ENCODE measurements at regions of chr20 and their contacts with region 1.

Region 1: DNA sequence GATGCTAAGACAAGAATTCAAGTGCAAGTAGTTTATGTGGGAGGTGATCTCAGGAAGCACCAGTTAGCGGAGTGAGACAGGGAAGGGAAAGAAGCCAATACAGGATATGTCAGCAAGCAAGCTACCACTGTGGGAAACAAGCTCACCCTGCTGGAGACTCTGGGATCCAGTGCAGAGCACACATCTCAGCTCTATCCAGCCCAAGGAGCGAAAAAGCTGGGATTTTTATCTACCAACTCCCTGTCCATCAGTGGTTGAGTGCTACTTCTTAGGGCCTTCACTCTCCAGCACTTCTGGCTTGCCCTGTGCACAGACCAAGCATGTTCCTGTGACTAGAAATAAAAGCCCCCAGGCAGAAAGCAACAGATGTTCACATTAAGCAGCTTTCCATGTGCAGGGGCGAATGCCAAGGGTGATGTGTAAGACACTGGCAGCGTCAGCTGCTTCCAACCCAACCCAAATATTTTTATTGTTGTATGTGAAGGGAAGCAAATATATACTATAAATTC is 10.8 kb upstream of the RNF24 start:
- DNase-seq: peak; percentile 73
- H3K27ac ChIP-seq: peak overlapping the region; percentile 76
- CTCF ChIP-seq: no peak

Region 2: DNA sequence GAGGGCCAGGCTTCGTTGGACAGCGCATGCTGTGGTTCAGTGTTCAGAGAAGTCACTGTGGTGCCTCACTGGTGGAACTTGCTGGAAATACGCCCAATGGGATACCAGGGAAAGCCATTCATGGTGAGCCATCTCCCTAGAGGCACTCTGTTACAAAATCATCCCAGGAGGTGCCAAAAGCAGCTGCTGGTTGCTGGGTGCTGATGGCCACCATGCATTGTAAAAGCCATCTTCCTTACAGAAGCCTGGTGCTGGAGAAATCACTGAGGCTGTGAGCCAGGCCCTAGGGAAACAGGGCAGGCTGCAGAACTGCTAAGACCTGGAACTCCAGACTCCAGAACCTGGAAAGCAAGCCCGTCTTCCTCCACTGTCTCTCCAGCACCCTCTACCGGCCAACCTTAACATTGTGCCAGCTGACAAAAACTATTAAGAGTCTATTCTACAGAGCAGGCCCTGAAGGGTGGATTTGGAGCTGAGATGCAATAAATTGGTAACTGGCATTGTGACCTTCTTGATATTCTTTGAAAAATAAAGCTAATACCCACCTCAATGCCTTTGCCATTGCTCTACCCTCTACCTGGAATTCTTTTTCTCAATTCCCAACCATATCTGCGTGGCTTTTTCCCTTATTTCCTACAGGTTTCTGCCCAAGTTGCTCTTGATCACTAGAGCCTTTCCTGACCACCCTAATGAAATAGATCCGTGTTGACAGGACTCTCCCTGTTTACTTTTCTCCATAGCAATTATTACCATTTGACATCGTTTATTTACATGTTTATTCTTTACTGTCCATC is 1574.0 kb before region 1 on chr20:
- CTCF ChIA-PET with region 1: interaction called, 10 read pairs
- POLR2A ChIA-PET with region 1: no interaction called
- DNase-seq: peak; percentile 71
- H3K27ac ChIP-seq: peak overlapping the region; percentile 65
- CTCF ChIP-seq: peak; percentile 91